ENCODE measurements at regions of chr4 and their contacts with region 1.

Region 1: DNA sequence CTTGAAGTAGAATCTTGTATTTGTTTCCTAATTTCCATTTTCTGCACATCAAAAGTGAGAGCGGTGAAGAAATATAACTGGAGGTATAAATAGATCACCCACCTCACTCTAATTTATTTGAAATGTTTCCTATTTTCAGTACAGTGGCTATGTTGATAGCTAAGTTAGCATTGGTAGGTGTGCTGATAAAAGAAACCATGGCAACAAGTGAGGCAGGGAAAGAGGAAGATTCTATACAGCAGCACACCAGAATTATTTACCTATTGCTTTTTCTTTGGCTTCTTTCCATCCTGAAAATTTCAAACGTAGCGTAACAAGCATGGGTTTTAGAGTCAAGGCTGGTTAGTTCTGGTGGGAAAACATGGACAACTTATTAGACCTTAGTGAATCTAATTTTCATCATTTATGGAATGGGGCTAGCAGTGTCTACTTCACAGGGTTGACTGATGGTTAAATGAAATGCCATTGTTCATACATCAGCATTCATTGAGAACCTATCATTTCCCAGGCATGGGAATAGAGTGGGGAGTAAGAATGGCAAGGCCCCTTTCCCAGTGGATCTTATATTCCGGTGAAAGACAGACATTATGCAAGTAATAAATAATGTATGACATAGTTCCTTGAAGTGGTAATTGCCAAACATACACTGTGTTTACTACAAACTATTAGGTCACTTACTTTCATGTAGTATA is 30.6 kb upstream of the CTSO start:
- DNase-seq: no peak
- ATAC-seq: no peak
- H3K4me3 ChIP-seq: no peak overlapping the region
- H3K27ac ChIP-seq: no peak overlapping the region
- H3K4me1 ChIP-seq: no peaks in the 10 kb centered on the region
- H3K27me3 ChIP-seq: no peaks in the 10 kb centered on the region
- CTCF ChIP-seq: no peak
- EP300 ChIP-seq: no peak
- POLR2A ChIP-seq: no peak
- RAD21 ChIP-seq: no peak

Region 2: DNA sequence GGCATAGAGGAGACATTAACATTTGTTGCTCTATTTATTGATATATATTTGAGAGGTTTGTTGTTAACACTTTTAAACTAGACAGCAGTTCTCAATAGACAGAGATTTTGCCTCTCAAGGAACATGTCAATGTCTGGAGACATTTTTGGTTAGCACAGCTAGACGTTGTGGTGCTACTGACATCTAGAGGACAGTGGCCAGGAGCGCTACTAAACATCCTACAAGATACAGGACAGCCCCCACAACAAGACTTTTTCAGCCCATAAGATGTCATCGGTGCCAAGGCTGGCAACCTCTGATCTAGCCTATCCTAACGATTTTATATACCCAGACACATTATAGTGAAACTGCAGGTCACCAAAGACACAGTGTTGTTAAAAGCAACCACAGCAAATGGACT is 12.2 kb before region 1 on chr4:
- CTCF ChIA-PET with region 1: interaction called, 12 read pairs
- POLR2A ChIA-PET with region 1: interaction called, 3 read pairs
- RAD21 ChIA-PET with region 1: interaction called, 5 read pairs
- SMC1A ChIA-PET with region 1: interaction called, 5 read pairs
- in situ Hi-C with region 1: no loop called
- intact Hi-C with region 1: no loop called
- DNase-seq: peak; percentile 8
- ATAC-seq: peak; percentile 76
- H3K4me3 ChIP-seq: no peak overlapping the region
- H3K27ac ChIP-seq: no peak overlapping the region
- H3K4me1 ChIP-seq: peaks cover 11% of the 10 kb centered on the region
- H3K27me3 ChIP-seq: no peaks in the 10 kb centered on the region
- CTCF ChIP-seq: peak; percentile 41 to 49 (median 44); a peak in 5 of 6 replicates
- EP300 ChIP-seq: no peak
- POLR2A ChIP-seq: no peak
- RAD21 ChIP-seq: peak; percentile 68

Region 3: DNA sequence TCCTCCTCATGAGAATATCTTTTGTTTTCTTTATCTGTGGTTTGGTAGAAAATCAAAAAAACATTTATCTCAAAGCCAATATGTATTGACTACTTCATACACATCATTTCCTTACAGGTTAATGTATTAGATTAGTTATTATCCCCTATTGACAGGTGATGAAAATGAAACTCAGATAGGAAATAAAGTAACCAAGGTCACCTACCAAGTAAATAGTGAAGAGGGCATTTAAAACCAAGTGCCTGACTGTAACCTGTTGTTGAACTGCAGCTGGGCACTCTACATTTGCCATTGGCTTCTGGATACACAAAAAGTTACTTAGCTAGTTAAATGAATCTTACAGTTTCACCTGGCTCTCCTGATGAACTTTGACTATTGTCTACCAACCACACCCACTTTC is 10.8 kb after region 1 on chr4:
- CTCF ChIA-PET with region 1: interaction called, 8 read pairs
- POLR2A ChIA-PET with region 1: no interaction called
- RAD21 ChIA-PET with region 1: no interaction called
- SMC1A ChIA-PET with region 1: interaction called, 12 read pairs
- in situ Hi-C with region 1: no loop called
- intact Hi-C with region 1: no loop called
- DNase-seq: no peak
- ATAC-seq: peak; percentile 57
- H3K4me3 ChIP-seq: no peak overlapping the region
- H3K27ac ChIP-seq: no peak overlapping the region
- H3K4me1 ChIP-seq: no peaks in the 10 kb centered on the region
- H3K27me3 ChIP-seq: no peaks in the 10 kb centered on the region
- CTCF ChIP-seq: no peak
- EP300 ChIP-seq: no peak
- POLR2A ChIP-seq: no peak
- RAD21 ChIP-seq: no peak

Measured in GM12878 (cell line).